ENCODE measurements at regions of chr22 and their contacts with region 1.

Region 1: GRCh38 chr22:35627264-35628041 is 10.3 kb upstream of the MB start:
- DNase-seq: no peak
- H3K4me3 ChIP-seq: peak overlapping the region; percentile 20 to 71 (median 40)
- H3K27ac ChIP-seq: peak overlapping the region; percentile 46 to 83 (median 70)
- H3K4me1 ChIP-seq: peaks cover 0 to 46% (median 22%) of the 10 kb centered on the region in 6 donors
- H3K27me3 ChIP-seq: peaks cover 0 to 44% (median 0%) of the 10 kb centered on the region in 7 donors
- CTCF ChIP-seq: peak in 7 of 11 experiments; percentile 10 to 57 (median 41)
- POLR2A ChIP-seq: no peak

Region 2: DNA sequence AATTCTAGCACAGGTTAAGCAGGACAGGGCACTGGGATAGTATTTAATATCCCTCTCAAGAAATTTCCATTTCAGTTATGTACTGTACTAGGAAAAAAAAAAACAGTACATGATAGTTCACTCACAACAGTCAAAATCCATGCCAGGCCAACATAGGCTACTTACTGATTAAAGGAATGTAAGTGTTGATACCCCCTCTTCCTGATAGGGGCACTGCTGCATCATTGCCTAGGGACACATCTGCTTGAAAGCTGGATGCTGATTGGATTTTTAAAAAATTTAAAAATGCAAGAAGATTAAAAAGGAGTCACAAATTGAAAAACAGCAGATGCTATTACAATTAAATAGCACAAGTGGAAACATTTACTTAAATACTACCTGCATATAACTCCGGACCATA is 133.6 kb after region 1 on chr22:
- intact Hi-C with region 1: no loop called
- DNase-seq: no peak
- H3K4me3 ChIP-seq: no peak overlapping the region
- H3K27ac ChIP-seq: no peak overlapping the region
- H3K4me1 ChIP-seq: no peaks in the 10 kb centered on the region
- H3K27me3 ChIP-seq: peaks cover 0 to 20% (median 0%) of the 10 kb centered on the region in 7 donors
- CTCF ChIP-seq: no peak
- POLR2A ChIP-seq: no peak

Region 3: DNA sequence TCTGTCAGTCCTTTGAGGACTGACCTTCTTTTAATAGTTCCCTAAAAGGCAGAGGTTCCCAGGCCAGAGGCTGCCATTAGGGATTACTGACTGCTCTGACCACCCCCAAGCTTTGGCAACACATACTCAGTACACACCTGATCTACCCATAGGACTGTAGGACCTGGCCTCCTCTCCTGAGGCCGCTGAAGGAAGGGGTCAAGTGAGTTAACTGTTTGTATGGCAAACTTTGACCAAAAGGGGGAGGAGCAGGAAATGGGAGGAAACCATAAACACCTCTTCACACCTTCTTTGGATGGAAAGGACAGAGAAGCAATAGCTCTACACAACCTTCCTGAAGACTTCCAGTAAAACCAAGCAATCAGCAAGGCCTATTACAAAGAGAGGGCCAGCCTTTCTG is 194.2 kb after region 1 on chr22:
- intact Hi-C with region 1: no loop called
- DNase-seq: no peak
- H3K4me3 ChIP-seq: no peak overlapping the region
- H3K27ac ChIP-seq: no peak overlapping the region
- H3K4me1 ChIP-seq: no peaks in the 10 kb centered on the region
- H3K27me3 ChIP-seq: no peaks in the 10 kb centered on the region
- CTCF ChIP-seq: no peak
- POLR2A ChIP-seq: no peak

Region 4: GRCh38 chr22:35840302-35840739 is 212.9 kb after region 1 on chr22:
- intact Hi-C with region 1: loop called (anchors 10 kb)
- DNase-seq: peak; percentile 76
- H3K4me3 ChIP-seq: peak overlapping the region in 7 of 8 donors; percentile 20 to 61 (median 32)
- H3K27ac ChIP-seq: peak overlapping the region in 7 of 8 donors; percentile 31 to 80 (median 67)
- H3K4me1 ChIP-seq: peaks cover 0 to 54% (median 26%) of the 10 kb centered on the region in 6 donors
- H3K27me3 ChIP-seq: peaks cover 0 to 23% (median 0%) of the 10 kb centered on the region in 7 donors
- CTCF ChIP-seq: no peak
- POLR2A ChIP-seq: no peak

Region 5: DNA sequence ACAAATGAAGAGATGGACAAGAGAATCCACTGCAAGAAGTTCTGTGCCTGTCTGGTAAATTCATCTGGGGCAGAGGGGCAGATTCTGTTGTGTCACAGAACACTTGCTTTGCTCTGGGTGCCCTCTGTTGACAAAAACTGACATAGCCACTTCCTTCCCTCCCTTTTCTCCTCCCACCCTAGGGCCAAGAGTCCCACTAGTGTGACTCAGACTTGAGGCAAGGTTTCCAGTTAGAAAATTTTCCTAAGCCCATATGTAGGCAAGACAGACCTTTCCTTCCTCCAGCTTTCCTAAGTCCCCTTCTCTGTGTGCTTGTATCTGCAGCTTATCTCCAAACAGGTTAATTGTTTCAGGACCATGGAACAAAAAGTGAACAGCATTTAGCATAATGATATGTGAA is 294.3 kb after region 1 on chr22:
- intact Hi-C with region 1: loop called (anchors 10 kb)
- DNase-seq: no peak
- H3K4me3 ChIP-seq: no peak overlapping the region
- H3K27ac ChIP-seq: peak overlapping the region in 3 of 8 donors; percentile 8 to 19 (median 9)
- H3K4me1 ChIP-seq: peaks cover 0 to 17% (median 7%) of the 10 kb centered on the region in 6 donors
- H3K27me3 ChIP-seq: no peaks in the 10 kb centered on the region
- CTCF ChIP-seq: peak in 8 of 11 experiments; percentile 16 to 68 (median 55)
- POLR2A ChIP-seq: no peak

Region 6: GRCh38 chr22:36123673-36124630 is 496.5 kb after region 1 on chr22:
- intact Hi-C with region 1: loop called (anchors 10 kb)
- DNase-seq: peak; percentile 98
- H3K4me3 ChIP-seq: peak overlapping the region in 3 of 8 donors; percentile 5 to 59 (median 17)
- H3K27ac ChIP-seq: peak overlapping the region; percentile 45 to 86 (median 79)
- H3K4me1 ChIP-seq: peaks cover 3 to 25% (median 16%) of the 10 kb centered on the region in 6 donors
- H3K27me3 ChIP-seq: peaks cover 0 to 6% (median 0%) of the 10 kb centered on the region in 7 donors
- CTCF ChIP-seq: peak; percentile 96 to 100 (median 98)
- POLR2A ChIP-seq: no peak

Measured in spleen (tissue), 13 donors.